ENCODE measurements at regions of chrX and their contacts with region 1.

Region 1: GRCh38 chrX:15854712-15855567 is at the start of gene AP1S2:
- DNase-seq: peak; percentile 87 to 99 (median 94)

Region 2: GRCh38 chrX:15563056-15563455 is 291.9 kb before region 1 on chrX:
- intact Hi-C with region 1: no loop called
- DNase-seq: no peak

Region 3: GRCh38 chrX:15911734-15912550 is 57.0 kb after region 1 on chrX:
- intact Hi-C with region 1: loop called (anchors 10 kb)
- DNase-seq: no peak

Region 4: DNA sequence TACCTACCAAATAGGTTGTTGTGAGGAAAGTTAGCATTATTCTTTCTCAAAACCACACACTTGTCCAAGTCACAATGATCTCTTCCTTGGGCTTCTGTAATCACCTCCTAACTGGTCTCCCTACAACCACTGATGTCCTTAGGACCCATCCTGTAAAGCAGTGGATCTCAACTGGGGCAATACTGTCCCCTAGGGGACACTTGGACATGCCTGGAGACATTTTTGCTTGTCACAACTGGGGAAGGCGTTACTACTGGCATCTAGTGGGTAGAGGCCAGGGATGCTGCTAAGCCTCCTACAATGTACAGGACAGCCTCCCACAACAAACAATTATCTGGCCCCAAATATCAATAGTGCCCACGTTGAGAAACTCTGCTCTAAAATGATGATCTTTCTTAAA is 118.4 kb after region 1 on chrX:
- intact Hi-C with region 1: loop called (anchors 5 kb)
- DNase-seq: peak in 5 of 10 donors; percentile 26 to 86 (median 28)

Region 5: GRCh38 chrX:16002185-16002584 is 147.2 kb after region 1 on chrX:
- intact Hi-C with region 1: no loop called
- DNase-seq: no peak

Measured in posterior cingulate gyrus (tissue), 11 donors.